Heart right ventricle (tissue), 16 donors: ENCODE measurements at regions of chr3 and their contacts with region 1.

Region 1: DNA sequence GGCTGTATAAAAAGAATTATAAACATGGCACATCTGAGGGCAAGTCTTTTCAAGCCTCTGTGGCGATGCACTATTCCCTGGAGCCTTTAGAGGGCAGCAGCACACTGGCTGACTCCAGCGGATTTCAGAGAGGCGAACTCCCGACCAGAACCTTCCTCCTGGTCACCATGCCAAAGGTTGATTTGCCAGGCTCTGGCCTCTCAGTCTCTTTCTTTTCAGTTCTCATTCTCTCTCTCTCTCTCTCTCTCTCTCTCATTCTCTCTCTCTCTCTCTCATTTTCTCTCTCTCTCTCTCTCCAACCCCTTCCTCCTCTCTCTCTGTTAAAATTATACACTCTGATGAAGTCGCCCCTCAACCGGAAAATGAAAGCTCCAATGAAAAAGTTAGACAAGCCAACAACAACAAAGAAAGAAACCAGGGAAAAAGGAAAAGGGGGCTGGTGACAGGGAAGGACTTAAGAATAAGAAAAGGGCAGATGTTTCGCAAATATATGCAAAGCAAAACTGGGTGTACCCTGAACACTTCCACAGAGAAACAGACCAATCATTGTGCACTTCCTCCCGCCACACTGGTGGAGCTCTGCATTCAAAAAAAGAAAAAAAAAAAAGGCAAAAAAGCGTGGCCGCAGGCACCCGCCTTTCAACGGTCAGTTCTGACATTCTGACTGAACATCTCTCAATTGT is 90.2 kb downstream of the TIGIT start:
- DNase-seq: peak; percentile 75 to 86
- ATAC-seq: peak; percentile 80 to 89 (median 86)
- H3K4me3 ChIP-seq: peak overlapping the region in 9 of 10 donors; percentile 24 to 55 (median 43)
- H3K27ac ChIP-seq: peak overlapping the region; percentile 32 to 83 (median 70)
- H3K4me1 ChIP-seq: peaks cover 10 to 51% (median 37%) of the 10 kb centered on the region in 9 donors
- H3K27me3 ChIP-seq: no peaks in the 10 kb centered on the region
- CTCF ChIP-seq: peak; percentile 89 to 97 (median 94)

Region 2: GRCh38 chr3:114418724-114419543 is 34.9 kb after region 1 on chr3:
- intact Hi-C with region 1: loop called in 4 of 10 experiments (anchors 5 kb)
- DNase-seq: no peak
- ATAC-seq: peak; percentile 79 to 91 (median 84)
- H3K4me3 ChIP-seq: peak overlapping the region in 5 of 10 donors; percentile 2 to 27 (median 23)
- H3K27ac ChIP-seq: peak overlapping the region; percentile 2 to 72 (median 45)
- H3K4me1 ChIP-seq: peaks cover 0 to 71% (median 32%) of the 10 kb centered on the region in 9 donors
- H3K27me3 ChIP-seq: no peaks in the 10 kb centered on the region
- CTCF ChIP-seq: peak; percentile 73 to 92 (median 86)

Region 3: DNA sequence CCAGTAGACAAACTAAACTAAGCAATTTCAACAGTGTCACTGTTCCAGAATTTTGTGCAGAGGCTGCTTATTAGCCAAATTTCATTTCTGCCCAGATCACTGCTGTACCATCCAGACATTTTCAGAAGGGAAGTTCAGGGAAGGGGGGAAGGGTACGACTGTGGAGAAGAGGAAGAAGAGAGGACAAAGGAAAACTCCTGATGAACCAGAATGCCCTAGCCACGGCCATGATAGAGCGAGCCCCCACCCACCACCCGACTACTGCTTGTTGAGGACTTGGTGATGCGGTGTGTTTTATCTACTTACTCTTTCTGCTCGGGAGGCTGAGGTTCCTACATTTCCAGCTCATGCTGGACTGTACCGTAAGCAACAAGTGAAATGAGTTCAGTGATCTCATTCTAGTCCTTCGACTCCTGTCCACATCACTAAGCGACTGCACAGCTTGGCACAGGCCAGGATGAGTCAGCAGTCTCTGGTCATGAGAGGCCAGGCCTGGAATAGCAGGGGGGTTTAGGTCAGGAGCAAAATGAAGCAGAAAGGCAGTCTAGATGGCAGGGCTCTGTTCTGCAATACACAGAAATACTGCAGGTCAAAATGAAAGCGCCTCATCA is 240.7 kb after region 1 on chr3:
- intact Hi-C with region 1: loop called in 1 of 10 experiments (anchors 5 kb)
- DNase-seq: peak; percentile 89 to 94
- ATAC-seq: peak; percentile 93 to 97 (median 94)
- H3K4me3 ChIP-seq: peak overlapping the region; percentile 23 to 59 (median 50)
- H3K27ac ChIP-seq: peak overlapping the region; percentile 88 to 98 (median 95)
- H3K4me1 ChIP-seq: peaks cover 9 to 87% (median 63%) of the 10 kb centered on the region in 9 donors
- H3K27me3 ChIP-seq: no peaks in the 10 kb centered on the region
- CTCF ChIP-seq: no peak

Region 4: GRCh38 chr3:114827495-114827894 is 443.5 kb after region 1 on chr3:
- intact Hi-C with region 1: loop called in 2 of 10 experiments (anchors 10 kb)
- DNase-seq: peak in 1 of 2 donors; percentile 24
- ATAC-seq: peak in 7 of 8 donors; percentile 62 to 81 (median 76)
- H3K4me3 ChIP-seq: no peak overlapping the region
- H3K27ac ChIP-seq: no peak overlapping the region
- H3K4me1 ChIP-seq: peaks cover 0 to 7% (median 0%) of the 10 kb centered on the region in 9 donors
- H3K27me3 ChIP-seq: no peaks in the 10 kb centered on the region
- CTCF ChIP-seq: peak in 8 of 9 donors; percentile 47 to 82 (median 73)

Region 5: GRCh38 chr3:115092220-115092791 is 708.3 kb after region 1 on chr3:
- intact Hi-C with region 1: loop called in 4 of 10 experiments (anchors 5 to 10 kb)
- DNase-seq: peak; percentile 41 to 74
- ATAC-seq: peak; percentile 95 to 99 (median 98)
- H3K4me3 ChIP-seq: no peak overlapping the region
- H3K27ac ChIP-seq: peak overlapping the region in 6 of 10 donors; percentile 7 to 48 (median 34)
- H3K4me1 ChIP-seq: peaks cover 0 to 78% (median 41%) of the 10 kb centered on the region in 9 donors
- H3K27me3 ChIP-seq: no peaks in the 10 kb centered on the region
- CTCF ChIP-seq: peak; percentile 44 to 82 (median 70)

Region 6: DNA sequence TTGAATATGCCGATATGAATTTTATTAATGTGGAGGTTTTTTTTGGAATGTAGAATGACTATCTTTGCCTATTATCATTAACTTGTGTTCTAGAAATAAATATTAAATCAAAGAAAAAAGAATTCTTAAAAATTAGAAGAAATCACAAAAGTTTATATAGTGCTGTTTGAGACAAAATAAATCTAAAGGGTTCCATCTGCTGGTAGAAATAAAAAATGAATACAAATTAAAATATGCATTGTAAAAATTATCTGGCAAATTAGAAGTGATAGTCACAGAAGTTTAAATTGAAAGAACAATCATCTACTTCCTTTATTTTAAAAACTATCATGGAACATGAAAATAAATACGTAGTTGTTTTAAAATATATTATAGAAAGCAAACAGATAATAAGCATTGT is 785.8 kb after region 1 on chr3:
- intact Hi-C with region 1: loop called in 3 of 10 experiments (anchors 10 kb)
- DNase-seq: no peak
- ATAC-seq: no peak
- H3K4me3 ChIP-seq: no peak overlapping the region
- H3K27ac ChIP-seq: no peak overlapping the region
- H3K4me1 ChIP-seq: no peaks in the 10 kb centered on the region
- H3K27me3 ChIP-seq: no peaks in the 10 kb centered on the region
- CTCF ChIP-seq: peak in 8 of 9 donors; percentile 34 to 66 (median 49)

Region 7: GRCh38 chr3:115623044-115623868 is 1239.2 kb after region 1 on chr3 and contains the start of gene GAP43:
- intact Hi-C with region 1: no loop called
- DNase-seq: peak; percentile 15 to 34
- ATAC-seq: peak in 7 of 8 donors; percentile 83 to 95 (median 89)
- H3K4me3 ChIP-seq: peak within 1 kb of the TSS in 9 of 10 donors; percentile 9 to 50 (median 43)
- H3K27ac ChIP-seq: no peak within 1 kb of the TSS
- H3K4me1 ChIP-seq: peaks cover 0 to 11% (median 9%) of the 10 kb centered on the region in 9 donors
- H3K27me3 ChIP-seq: peaks cover 0 to 53% (median 35%) of the 10 kb centered on the region in 7 donors
- CTCF ChIP-seq: no peak
- total RNA-seq, gene GAP43: 0.52 to 2.3 (median 0.83) TPM in 9 of 10 donors, not detected in the other